MCF 10A (cell line): ENCODE measurements at regions of chr2 and their contacts with region 1.

Region 1: GRCh38 chr2:196758474-196759377 is 40.8 kb downstream of the GTF3C3 start:
- DNase-seq: peak; percentile 2
- H3K4me3 Mint-ChIP-seq: no peak overlapping the region
- H3K27ac Mint-ChIP-seq: no peak overlapping the region
- H3K4me1 Mint-ChIP-seq: no peaks in the 10 kb centered on the region
- H3K27me3 Mint-ChIP-seq: no peaks in the 10 kb centered on the region
- CTCF ChIP-seq: no peak

Region 2: GRCh38 chr2:196482119-196483065 is 276.3 kb before region 1 on chr2:
- CTCF ChIA-PET with region 1: no interaction called
- POLR2A ChIA-PET with region 1: no interaction called
- intact Hi-C with region 1: no loop called
- DNase-seq: peak; percentile 63
- H3K4me3 Mint-ChIP-seq: no peak overlapping the region
- H3K27ac Mint-ChIP-seq: peak overlapping the region; percentile 66
- H3K4me1 Mint-ChIP-seq: peaks cover 49% of the 10 kb centered on the region
- H3K27me3 Mint-ChIP-seq: no peaks in the 10 kb centered on the region
- CTCF ChIP-seq: no peak

Region 3: GRCh38 chr2:196535742-196536141 is 223.0 kb before region 1 on chr2:
- CTCF ChIA-PET with region 1: interaction called, 6 read pairs
- POLR2A ChIA-PET with region 1: no interaction called
- intact Hi-C with region 1: loop called (anchors 1 kb)
- DNase-seq: peak; percentile 21
- H3K4me3 Mint-ChIP-seq: no peak overlapping the region
- H3K27ac Mint-ChIP-seq: no peak overlapping the region
- H3K4me1 Mint-ChIP-seq: no peaks in the 10 kb centered on the region
- H3K27me3 Mint-ChIP-seq: no peaks in the 10 kb centered on the region
- CTCF ChIP-seq: no peak